SK-N-SH (cell line): ENCODE measurements at regions of chr7 and their contacts with region 1.

Region 1: DNA sequence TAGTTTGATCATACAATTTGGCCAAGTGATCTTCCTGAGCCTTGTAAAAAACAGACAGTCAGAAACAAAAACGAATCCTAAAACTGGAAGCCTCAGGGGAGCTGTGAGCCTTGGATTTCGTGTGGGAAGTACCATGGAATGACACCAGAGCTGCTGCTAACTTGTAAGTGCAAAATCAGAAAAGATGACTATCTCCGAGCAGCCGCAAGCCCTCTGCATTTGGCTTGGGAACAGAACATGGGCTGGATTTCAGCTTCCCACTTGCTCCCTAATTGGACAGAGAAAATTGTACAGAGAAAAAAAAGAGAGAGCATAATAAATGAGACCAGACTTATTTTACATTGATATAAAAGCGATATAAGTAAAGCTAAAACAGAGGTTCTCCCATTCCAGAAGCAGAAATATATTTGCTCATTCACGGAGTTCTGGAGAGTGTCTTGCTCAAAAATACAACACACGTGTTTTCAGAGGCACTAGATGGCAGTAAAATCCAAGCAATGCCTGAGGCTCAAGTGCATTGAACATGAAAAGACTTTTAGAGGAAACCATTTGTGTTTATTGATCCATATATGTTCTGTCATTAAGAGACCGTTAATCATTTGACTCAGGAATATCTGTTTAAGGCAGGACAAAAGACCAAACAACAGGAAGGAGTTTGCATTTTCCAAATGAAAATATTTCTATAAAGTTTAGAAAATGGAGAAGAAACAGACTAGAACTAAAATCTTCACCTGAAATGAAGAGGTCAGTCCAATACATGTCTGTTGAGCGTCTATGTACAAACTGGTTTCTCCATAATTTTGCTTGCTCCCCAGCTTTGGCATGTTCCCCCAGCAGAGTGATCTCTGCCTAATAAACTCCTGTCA is 78.3 kb upstream of the SLC26A5 start:
- DNase-seq: peak; percentile 72
- H3K4me3 ChIP-seq: no peak overlapping the region; a peak in 1 of 4 replicates
- H3K27ac ChIP-seq: no peak overlapping the region
- H3K4me1 ChIP-seq: peaks cover 0 to 5% of the 10 kb centered on the region in 2 experiments; a peak in 1 of 4 replicates
- H3K27me3 ChIP-seq: no peaks in the 10 kb centered on the region
- CTCF ChIP-seq: peak; percentile 77
- EP300 ChIP-seq: no peak
- RAD21 ChIP-seq: peak; percentile 99

Region 2: GRCh38 chr7:103541026-103541425 is 16.8 kb after region 1 on chr7:
- CTCF ChIA-PET with region 1: interaction called, 24 read pairs
- POLR2A ChIA-PET with region 1: no interaction called
- DNase-seq: peak; percentile 57
- H3K4me3 ChIP-seq: no peak overlapping the region
- H3K27ac ChIP-seq: no peak overlapping the region
- H3K4me1 ChIP-seq: peaks cover 0 to 8% of the 10 kb centered on the region in 2 experiments; a peak in 2 of 4 replicates
- H3K27me3 ChIP-seq: no peaks in the 10 kb centered on the region
- CTCF ChIP-seq: no peak
- EP300 ChIP-seq: no peak
- RAD21 ChIP-seq: no peak

Region 3: DNA sequence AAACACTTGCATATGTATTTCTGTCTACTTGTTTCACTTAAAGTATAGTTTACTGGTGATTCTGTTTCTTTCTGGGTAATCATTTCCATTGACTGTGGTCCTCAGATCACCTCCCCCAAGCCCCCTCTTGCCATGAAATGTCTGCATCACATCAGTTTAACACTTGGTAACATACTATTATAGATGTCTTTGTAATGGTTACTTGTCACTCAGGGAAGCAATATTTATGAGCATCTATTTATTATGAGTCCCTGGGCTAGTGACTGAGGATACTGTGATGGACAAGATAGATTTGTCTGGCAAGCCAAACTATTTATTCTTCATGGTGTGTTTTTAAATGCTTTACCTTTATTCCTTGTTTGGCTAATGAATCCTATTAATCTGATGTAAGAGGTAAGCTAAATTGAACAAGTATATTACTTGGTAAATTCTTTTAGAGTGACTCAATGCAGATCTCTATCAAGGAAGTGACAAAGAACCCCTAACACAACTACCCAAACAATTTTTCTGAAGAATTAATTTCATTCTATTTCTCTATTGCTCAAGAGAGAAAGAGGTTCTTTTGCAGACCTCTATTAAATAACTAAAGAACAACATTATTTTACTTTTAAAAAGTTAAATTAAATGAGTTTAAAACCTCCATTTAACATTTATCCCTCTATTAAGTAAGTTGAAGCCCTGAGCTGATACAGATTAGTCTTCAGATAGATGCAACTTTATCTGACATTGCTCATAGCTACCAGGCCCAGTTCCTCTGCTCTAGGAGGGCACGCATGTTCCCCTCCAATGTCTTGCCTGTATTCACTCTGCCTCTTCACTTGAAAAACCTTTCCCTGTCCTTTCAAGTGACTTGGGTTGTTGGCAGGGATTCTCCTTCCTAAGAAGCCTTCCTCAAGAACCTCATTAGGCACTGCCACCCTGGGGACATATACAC is 194.5 kb after region 1 on chr7:
- CTCF ChIA-PET with region 1: no interaction called
- POLR2A ChIA-PET with region 1: no interaction called
- DNase-seq: no peak
- H3K4me3 ChIP-seq: no peak overlapping the region
- H3K27ac ChIP-seq: peak overlapping the region; percentile 28 to 69; a peak in 3 of 4 replicates
- H3K4me1 ChIP-seq: peaks cover 18 to 26% of the 10 kb centered on the region in 2 experiments
- H3K27me3 ChIP-seq: no peaks in the 10 kb centered on the region
- CTCF ChIP-seq: no peak
- EP300 ChIP-seq: 0 out of 4 replicates have a peak, but pooled peaks of 1 of the 2 experiments have one; percentile 28
- RAD21 ChIP-seq: no peak

Region 4: DNA sequence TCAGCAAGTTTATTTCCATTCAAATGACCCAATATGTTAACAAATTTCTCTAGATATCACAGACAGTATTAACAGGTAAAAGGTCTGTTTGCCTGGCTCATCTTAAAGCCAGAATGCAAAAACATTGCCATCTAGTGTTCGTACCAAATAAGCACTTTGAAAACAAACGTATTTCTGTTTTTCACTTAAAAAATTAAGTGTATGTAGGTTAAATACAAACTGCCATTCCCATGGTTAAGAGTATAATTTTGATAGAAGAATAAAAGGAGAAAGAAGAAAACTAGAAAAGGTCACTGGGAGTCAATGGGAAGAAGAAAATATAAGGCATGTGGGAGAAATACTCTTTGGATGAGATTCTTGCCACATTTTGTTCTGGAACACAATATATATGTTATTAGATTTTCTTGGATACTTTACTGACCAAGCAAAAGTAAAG is 632.6 kb after region 1 on chr7:
- CTCF ChIA-PET with region 1: interaction called, 17 read pairs
- POLR2A ChIA-PET with region 1: no interaction called
- DNase-seq: peak; percentile 24
- H3K4me3 ChIP-seq: peak overlapping the region in 1 of 2 experiments; percentile 30; a peak in 1 of 4 replicates
- H3K27ac ChIP-seq: no peak overlapping the region; a peak in 1 of 4 replicates
- H3K4me1 ChIP-seq: no peaks in the 10 kb centered on the region; a peak in 1 of 4 replicates
- H3K27me3 ChIP-seq: no peaks in the 10 kb centered on the region
- CTCF ChIP-seq: peak; percentile 97
- EP300 ChIP-seq: no peak
- RAD21 ChIP-seq: peak; percentile 94